Activated CD4-positive, alpha-beta memory T cell treated with anti-CD3 and anti-CD28 coated beads for 36 hours (primary cell): ENCODE measurements at regions of chr3 and their contacts with region 1.

Region 1: GRCh38 chr3:50235716-50236496 is at the start of gene GNAI2:
- DNase-seq: peak; percentile 100
- H3K4me3 Mint-ChIP-seq: peak within 1 kb of the TSS; percentile 91
- H3K27ac Mint-ChIP-seq: peak within 1 kb of the TSS; percentile 94
- H3K4me1 Mint-ChIP-seq: peaks cover 31% of the 10 kb centered on the region
- H3K27me3 Mint-ChIP-seq: no peaks in the 10 kb centered on the region
- total RNA-seq, gene GNAI2: 346 to 349 TPM

Region 2: DNA sequence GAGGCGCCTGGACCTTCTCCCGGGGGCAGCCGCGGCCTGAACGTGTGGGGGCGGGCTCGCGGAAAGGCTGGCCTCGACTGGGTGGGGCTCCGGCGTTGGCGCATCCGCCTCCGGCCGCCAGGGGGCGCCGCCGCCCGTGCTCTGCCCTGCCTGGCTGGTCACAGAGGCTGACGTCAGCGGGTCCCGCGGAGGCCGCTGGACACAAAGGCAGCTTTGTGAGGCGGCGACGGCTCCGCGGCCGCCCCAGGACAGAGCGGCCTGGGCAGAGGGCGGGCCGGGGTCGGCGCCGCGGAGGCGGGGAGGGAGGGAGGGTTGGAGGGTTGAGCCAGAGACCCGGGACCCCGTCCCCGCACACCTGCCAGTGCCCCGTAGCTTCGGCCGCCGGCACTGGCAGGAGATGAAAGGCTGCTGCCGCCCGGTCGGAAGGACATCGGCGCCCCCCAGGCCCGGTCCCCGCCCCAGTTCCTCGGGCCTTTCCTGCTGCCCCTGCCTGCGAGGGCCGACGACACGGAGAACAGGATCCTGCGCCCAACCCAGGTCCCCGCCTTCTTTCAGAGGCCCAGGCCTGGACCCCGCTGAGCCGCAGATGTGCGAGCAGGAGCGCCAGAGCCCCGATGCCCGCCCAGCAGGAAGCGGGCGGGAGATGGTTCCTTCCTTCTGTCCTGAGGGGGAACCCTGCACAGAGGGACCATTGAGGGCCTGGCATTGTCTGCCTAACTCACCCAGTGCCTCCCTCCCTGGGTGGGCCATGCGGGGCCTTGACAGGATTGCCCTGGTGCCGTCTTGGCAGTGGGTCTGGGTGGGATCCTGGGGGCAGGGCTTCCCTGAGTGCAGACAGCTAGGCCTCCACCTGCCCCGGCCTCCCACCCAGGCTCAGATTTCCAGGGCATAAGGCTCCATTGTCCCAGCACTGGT is 24.4 kb after region 1 on chr3:
- CTCF ChIA-PET with region 1: interaction called, 96 read pairs
- POLR2A ChIA-PET with region 1: interaction called, 4 read pairs
- intact Hi-C with region 1: no loop called
- DNase-seq: peak; percentile 92
- H3K4me3 Mint-ChIP-seq: peak overlapping the region; percentile 59
- H3K27ac Mint-ChIP-seq: peak overlapping the region; percentile 69
- H3K4me1 Mint-ChIP-seq: peaks cover 6% of the 10 kb centered on the region
- H3K27me3 Mint-ChIP-seq: no peaks in the 10 kb centered on the region